PC-9 (cell line): ENCODE measurements at regions of chr1 and their contacts with region 1.

Region 1: GRCh38 chr1:55277377-55278130 is 62.4 kb upstream of the USP24 start:
- DNase-seq: peak; percentile 60 to 71
- H3K4me3 ChIP-seq: no peak overlapping the region
- H3K27ac ChIP-seq: no peak overlapping the region
- H3K4me1 ChIP-seq: peaks cover 12% of the 10 kb centered on the region
- H3K27me3 ChIP-seq: no peaks in the 10 kb centered on the region
- CTCF ChIP-seq: peak; percentile 91

Region 2: GRCh38 chr1:55035904-55036303 is 241.7 kb before region 1 on chr1:
- CTCF ChIA-PET with region 1: no interaction called
- POLR2A ChIA-PET with region 1: no interaction called
- intact Hi-C with region 1: no loop called
- DNase-seq: peak in 1 of 2 experiments; percentile 52
- H3K4me3 ChIP-seq: no peak overlapping the region
- H3K27ac ChIP-seq: no peak overlapping the region
- H3K4me1 ChIP-seq: peaks cover 30% of the 10 kb centered on the region
- H3K27me3 ChIP-seq: 0 out of 2 replicates have a peak, but pooled peaks cover 4% of the 10 kb centered on the region
- CTCF ChIP-seq: no peak

Region 3: GRCh38 chr1:55071477-55071876 is 206.1 kb before region 1 on chr1:
- CTCF ChIA-PET with region 1: no interaction called
- POLR2A ChIA-PET with region 1: no interaction called
- intact Hi-C with region 1: loop called (anchors 5 kb)
- DNase-seq: peak in 1 of 2 experiments; percentile 52
- H3K4me3 ChIP-seq: no peak overlapping the region
- H3K27ac ChIP-seq: no peak overlapping the region
- H3K4me1 ChIP-seq: no peaks in the 10 kb centered on the region
- H3K27me3 ChIP-seq: no peaks in the 10 kb centered on the region
- CTCF ChIP-seq: peak; percentile 60; the same call in 1 of the 2 replicates

Region 4: DNA sequence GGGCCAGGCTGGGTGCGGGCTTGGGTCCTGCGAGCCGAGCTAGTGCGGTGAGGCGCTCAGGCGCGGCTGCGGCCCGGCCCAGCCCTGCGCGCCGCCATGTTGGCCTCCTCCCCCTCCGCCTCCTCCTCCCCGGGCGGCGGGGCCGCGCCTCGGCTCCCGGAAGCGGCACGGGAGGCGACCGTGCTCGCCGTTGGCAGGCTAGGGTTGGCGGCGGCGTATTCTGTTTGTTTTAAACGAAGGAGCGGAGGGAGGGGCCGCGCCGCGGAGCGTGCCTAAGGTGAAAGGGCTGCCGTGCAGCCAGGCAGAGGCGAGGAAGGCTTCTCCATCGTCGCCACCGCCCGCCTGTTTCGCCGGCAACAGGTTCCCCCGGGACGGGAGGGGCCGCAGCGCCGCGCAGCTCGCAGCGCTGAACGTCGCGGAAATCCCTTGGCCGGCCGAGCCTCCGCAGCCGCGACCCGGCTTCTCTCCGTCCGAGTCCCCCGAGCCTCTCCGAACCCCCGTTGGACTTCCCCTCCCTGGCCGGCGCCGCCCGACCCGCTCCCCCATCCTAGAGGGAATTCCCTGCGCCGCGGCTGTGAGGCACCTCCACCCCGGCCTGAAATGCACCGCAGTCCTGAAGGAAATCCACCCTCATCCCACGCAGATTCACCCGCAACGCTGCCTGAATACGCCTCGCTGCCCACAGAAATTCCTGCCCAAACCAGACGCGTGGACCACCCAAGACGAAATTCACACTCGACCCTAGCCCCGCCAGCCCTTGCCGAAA is 62.1 kb before region 1 on chr1 and contains the start of gene USP24:
- CTCF ChIA-PET with region 1: interaction called, 3 read pairs
- POLR2A ChIA-PET with region 1: no interaction called
- intact Hi-C with region 1: loop called (anchors 2 kb)
- DNase-seq: peak; percentile 71 to 87
- H3K4me3 ChIP-seq: peak within 1 kb of the TSS; percentile 92
- H3K27ac ChIP-seq: peak within 1 kb of the TSS; percentile 87
- H3K4me1 ChIP-seq: peaks cover 58% of the 10 kb centered on the region
- H3K27me3 ChIP-seq: no peaks in the 10 kb centered on the region
- CTCF ChIP-seq: no peak
- total RNA-seq, gene USP24: 56.3 and 61.0 TPM in 2 replicates

Region 5: GRCh38 chr1:55244476-55245099 is 33.0 kb before region 1 on chr1:
- CTCF ChIA-PET with region 1: interaction called, 3 read pairs
- POLR2A ChIA-PET with region 1: no interaction called
- intact Hi-C with region 1: loop called (anchors 1 kb)
- DNase-seq: peak; percentile 39 to 86
- H3K4me3 ChIP-seq: peak overlapping the region; percentile 23; the same call in 1 of the 2 replicates
- H3K27ac ChIP-seq: peak overlapping the region; percentile 96
- H3K4me1 ChIP-seq: peaks cover 57% of the 10 kb centered on the region
- H3K27me3 ChIP-seq: no peaks in the 10 kb centered on the region
- CTCF ChIP-seq: no peak